CD4-positive, alpha-beta memory T cell (primary cell): ENCODE measurements at regions of chr2 and their contacts with region 1.

Region 1: DNA sequence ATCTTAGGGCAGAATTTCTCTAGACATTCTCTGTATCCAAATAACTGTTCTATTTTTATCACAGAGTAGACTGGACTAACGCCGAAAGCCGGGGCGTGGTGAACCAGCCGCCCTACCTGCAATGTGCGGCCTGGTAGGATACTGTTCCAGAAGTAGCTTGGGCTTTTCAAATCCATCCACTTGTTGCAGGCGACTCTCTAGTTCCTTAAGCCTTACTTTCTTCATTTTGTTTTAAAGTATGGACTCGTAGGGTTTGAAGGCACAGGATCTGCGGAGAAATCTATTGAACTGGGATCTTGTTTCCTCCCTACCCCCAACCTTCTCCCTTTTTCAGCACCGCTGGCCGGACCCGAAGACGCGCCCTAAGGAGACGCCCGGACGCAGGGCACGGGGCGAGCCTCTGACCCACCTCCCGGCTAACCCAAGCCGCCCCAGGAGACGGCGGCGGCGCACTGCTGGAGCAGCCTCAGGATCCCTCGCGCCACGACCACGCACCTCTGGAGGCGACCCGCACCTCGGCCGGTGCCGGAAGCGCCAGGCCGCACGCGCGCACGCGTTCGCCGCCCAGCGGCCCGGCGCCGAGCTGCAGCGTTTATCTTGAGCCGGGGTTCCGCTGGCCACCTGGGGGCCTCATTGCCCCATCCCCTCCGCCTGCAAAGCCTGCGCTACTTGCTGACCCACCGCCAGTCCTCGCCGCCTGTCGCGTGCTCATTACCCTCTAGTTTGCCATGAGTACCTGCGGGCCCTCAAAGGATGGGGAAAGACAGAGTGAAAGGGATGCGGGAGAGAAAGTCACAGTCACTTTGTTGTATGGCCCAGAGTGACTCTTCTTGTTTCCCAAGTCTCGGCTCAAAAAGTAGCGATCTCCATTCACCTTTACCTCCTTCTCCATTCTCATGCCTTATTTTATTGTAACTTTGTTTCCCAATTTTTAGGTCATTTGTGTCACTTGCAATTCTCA is at the start of gene METTL5:
- DNase-seq: peak; percentile 69 to 79 (median 73)
- H3K4me3 ChIP-seq: peak within 1 kb of the TSS; percentile 77 to 88
- H3K4me3 Mint-ChIP-seq: peak within 1 kb of the TSS; percentile 90 to 98 (median 94)
- H3K27ac ChIP-seq: peak within 1 kb of the TSS; percentile 66
- H3K27ac Mint-ChIP-seq: peak within 1 kb of the TSS; percentile 74 to 96 (median 92)
- H3K4me1 ChIP-seq: peaks cover 56% of the 10 kb centered on the region
- H3K4me1 Mint-ChIP-seq: peaks cover 33 to 72% (median 51%) of the 10 kb centered on the region in 4 donors
- H3K27me3 ChIP-seq: no peaks in the 10 kb centered on the region
- H3K27me3 Mint-ChIP-seq: no peaks in the 10 kb centered on the region
- total RNA-seq, gene METTL5: 44.4 to 50.4 TPM

Region 2: GRCh38 chr2:169573160-169573973 is 251.3 kb before region 1 on chr2 and contains the start of gene FASTKD1:
- CTCF ChIA-PET with region 1: interaction called, 6 read pairs
- POLR2A ChIA-PET with region 1: interaction called, 3 read pairs
- intact Hi-C with region 1: loop called (anchors 1 kb)
- DNase-seq: peak; percentile 78 to 90 (median 82)
- H3K4me3 ChIP-seq: peak within 1 kb of the TSS; percentile 38 to 80
- H3K4me3 Mint-ChIP-seq: peak within 1 kb of the TSS; percentile 95 to 99 (median 97)
- H3K27ac ChIP-seq: peak within 1 kb of the TSS; percentile 82
- H3K27ac Mint-ChIP-seq: peak within 1 kb of the TSS; percentile 87 to 98 (median 95)
- H3K4me1 ChIP-seq: peaks cover 12% of the 10 kb centered on the region
- H3K4me1 Mint-ChIP-seq: peaks cover 14 to 32% (median 25%) of the 10 kb centered on the region in 4 donors
- H3K27me3 ChIP-seq: no peaks in the 10 kb centered on the region
- H3K27me3 Mint-ChIP-seq: peaks cover 2 to 3% of the 10 kb centered on the region in 2 donors
- total RNA-seq, gene FASTKD1: 25.8 to 31.8 TPM

Region 3: GRCh38 chr2:169683054-169683424 is 141.6 kb before region 1 on chr2:
- CTCF ChIA-PET with region 1: no interaction called
- POLR2A ChIA-PET with region 1: no interaction called
- intact Hi-C with region 1: no loop called
- DNase-seq: no peak
- H3K4me3 ChIP-seq: no peak overlapping the region
- H3K4me3 Mint-ChIP-seq: peak overlapping the region in 1 of 8 donors; percentile 1
- H3K27ac ChIP-seq: no peak overlapping the region
- H3K27ac Mint-ChIP-seq: peak overlapping the region in 4 of 7 donors; percentile 20 to 37 (median 28)
- H3K4me1 ChIP-seq: no peaks in the 10 kb centered on the region
- H3K4me1 Mint-ChIP-seq: peaks cover 0 to 8% (median under 1%) of the 10 kb centered on the region in 4 donors
- H3K27me3 ChIP-seq: no peaks in the 10 kb centered on the region
- H3K27me3 Mint-ChIP-seq: no peaks in the 10 kb centered on the region

Region 4: DNA sequence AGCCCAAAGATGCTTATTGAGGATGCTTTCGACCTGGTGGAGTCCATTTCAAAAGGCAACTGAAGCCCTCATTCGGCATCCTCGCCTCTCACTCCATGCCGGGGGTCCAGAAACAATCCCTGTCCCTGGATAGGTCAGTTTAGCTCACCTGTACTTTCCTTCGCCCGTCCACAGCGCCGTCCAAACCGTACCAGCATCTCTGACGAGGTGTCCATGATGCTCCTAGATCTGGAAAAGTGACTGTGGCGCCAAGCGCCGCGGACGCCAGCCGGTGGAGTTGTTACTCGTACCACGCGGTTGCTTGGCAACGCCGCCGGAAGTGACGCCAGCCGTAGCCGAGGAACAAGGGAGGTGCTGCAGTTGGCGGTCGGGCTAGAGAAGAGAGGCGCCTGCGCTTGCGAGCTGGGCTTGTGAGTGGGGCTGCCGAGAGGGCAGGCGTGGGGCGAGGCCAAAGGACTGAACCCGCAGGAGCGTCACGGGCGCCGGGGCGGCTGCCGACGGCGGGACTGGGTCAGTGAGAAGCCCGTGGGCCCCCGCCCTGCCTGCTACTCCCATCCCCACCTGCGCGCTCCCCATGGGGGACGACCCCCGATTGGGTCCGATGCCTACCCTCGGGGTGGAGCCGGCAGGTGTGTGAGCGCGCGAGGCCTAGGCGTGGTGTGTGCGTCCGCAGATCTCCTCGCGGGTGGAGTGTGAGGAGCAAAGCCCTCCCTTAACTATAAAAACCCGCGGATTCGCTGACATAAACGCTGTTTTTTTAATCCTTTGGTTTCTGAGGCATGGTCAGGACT is 130.3 kb before region 1 on chr2 and contains the starts of genes CFAP210 and PHOSPHO2:
- CTCF ChIA-PET with region 1: interaction called, 3 read pairs
- POLR2A ChIA-PET with region 1: interaction called, 6 read pairs
- intact Hi-C with region 1: loop called (anchors 1 kb)
- DNase-seq: peak; percentile 98 to 99 (median 99)
- H3K4me3 ChIP-seq: peak within 1 kb of the TSS; percentile 37 to 69
- H3K4me3 Mint-ChIP-seq: peak within 1 kb of the TSS; percentile 88 to 96 (median 92)
- H3K27ac ChIP-seq: peak within 1 kb of the TSS; percentile 72
- H3K27ac Mint-ChIP-seq: peak within 1 kb of the TSS; percentile 93 to 100 (median 99)
- H3K4me1 ChIP-seq: peaks cover 15% of the 10 kb centered on the region
- H3K4me1 Mint-ChIP-seq: peaks cover 12 to 21% (median 16%) of the 10 kb centered on the region in 4 donors
- H3K27me3 ChIP-seq: no peaks in the 10 kb centered on the region
- H3K27me3 Mint-ChIP-seq: peaks cover 5 to 8% of the 10 kb centered on the region in 2 donors
- total RNA-seq, gene CFAP210: not detected
- total RNA-seq, gene PHOSPHO2: 7.2 to 7.4 TPM

Region 5: DNA sequence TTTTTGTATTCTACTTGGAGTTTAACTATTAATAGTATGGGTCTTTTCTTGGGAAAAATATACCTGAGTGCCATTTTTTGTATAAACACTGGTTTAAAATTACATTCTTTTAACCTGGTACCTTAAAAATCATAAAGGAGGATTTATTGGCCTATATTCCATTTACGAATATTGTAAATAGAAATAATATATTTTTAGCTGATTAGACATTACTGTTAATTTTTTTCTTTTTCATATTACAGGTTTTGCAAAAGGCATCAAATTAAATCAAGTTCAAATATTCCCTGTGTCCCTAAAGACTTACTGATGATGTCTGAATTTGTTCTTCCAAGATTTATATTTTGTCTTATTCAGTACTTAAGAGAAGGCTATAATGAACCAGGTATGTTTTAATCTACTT is 47.3 kb after region 1 on chr2:
- CTCF ChIA-PET with region 1: interaction called, 14 read pairs
- POLR2A ChIA-PET with region 1: interaction called, 3 read pairs
- intact Hi-C with region 1: loop called (anchors 5 kb)
- DNase-seq: no peak
- H3K4me3 ChIP-seq: no peak overlapping the region
- H3K4me3 Mint-ChIP-seq: no peak overlapping the region
- H3K27ac ChIP-seq: no peak overlapping the region
- H3K27ac Mint-ChIP-seq: no peak overlapping the region
- H3K4me1 ChIP-seq: peaks cover 5% of the 10 kb centered on the region
- H3K4me1 Mint-ChIP-seq: peaks cover 6 to 20% (median 12%) of the 10 kb centered on the region in 4 donors
- H3K27me3 ChIP-seq: no peaks in the 10 kb centered on the region
- H3K27me3 Mint-ChIP-seq: no peaks in the 10 kb centered on the region

Region 6: DNA sequence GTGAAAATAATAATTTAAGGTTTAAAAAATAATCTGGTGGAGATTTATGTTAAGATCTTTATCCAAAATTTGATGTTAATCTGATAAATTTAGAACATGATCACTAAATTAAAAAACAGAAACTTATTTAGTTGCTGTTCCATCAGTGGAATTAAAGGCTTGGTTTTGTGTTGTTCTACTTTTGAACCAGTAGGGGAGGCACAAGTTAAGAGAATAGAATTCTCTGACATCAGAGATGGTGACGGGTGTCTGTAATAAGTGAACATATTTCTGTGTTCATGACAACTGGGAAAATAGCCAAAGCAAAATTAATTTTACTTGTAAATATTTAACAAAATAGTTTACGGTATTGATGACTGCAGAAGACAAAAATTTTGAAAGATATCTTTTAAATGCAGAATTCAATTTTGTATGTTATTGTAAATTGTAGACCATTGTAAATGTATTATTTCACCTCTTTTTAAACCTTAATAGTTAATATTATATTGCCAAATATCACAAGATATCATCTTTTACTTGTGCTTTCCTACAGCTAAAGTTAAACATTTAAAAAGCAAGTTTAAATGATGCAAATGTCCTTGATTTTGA is 108.6 kb after region 1 on chr2:
- CTCF ChIA-PET with region 1: interaction called, 6 read pairs
- POLR2A ChIA-PET with region 1: no interaction called
- intact Hi-C with region 1: loop called (anchors 2 kb)
- DNase-seq: peak in 1 of 5 donors; percentile 6
- H3K4me3 ChIP-seq: no peak overlapping the region
- H3K4me3 Mint-ChIP-seq: no peak overlapping the region
- H3K27ac ChIP-seq: no peak overlapping the region
- H3K27ac Mint-ChIP-seq: no peak overlapping the region
- H3K4me1 ChIP-seq: no peaks in the 10 kb centered on the region
- H3K4me1 Mint-ChIP-seq: peaks cover 0 to 4% (median 0%) of the 10 kb centered on the region in 4 donors
- H3K27me3 ChIP-seq: no peaks in the 10 kb centered on the region
- H3K27me3 Mint-ChIP-seq: no peaks in the 10 kb centered on the region

Region 7: DNA sequence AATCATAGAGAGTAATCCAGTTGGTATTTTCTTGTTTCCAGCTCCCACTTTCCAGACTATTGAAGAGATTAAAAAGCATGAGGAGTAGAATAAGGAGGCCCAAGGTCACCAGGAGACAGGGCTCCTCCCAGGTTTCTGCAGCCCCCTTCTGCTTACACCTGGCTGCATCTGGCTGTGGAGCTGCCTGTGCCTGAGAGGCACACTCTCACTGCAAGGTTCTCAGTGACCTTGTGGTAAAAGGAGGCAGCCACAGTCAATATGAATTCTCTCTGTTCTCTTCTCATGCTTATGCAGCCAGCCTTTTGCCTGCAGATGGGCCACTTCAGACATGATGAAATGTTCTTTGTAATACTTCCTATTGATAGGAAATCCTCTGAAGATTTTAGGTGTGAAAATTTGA is 587.0 kb after region 1 on chr2:
- CTCF ChIA-PET with region 1: no interaction called
- POLR2A ChIA-PET with region 1: no interaction called
- intact Hi-C with region 1: no loop called
- DNase-seq: no peak
- H3K4me3 ChIP-seq: no peak overlapping the region
- H3K4me3 Mint-ChIP-seq: no peak overlapping the region
- H3K27ac ChIP-seq: no peak overlapping the region
- H3K27ac Mint-ChIP-seq: no peak overlapping the region
- H3K4me1 ChIP-seq: peaks cover 7% of the 10 kb centered on the region
- H3K4me1 Mint-ChIP-seq: peaks cover 3 to 7% (median 6%) of the 10 kb centered on the region in 4 donors
- H3K27me3 ChIP-seq: peaks cover 11% of the 10 kb centered on the region
- H3K27me3 Mint-ChIP-seq: peaks cover 9 to 20% of the 10 kb centered on the region in 2 donors